Breast epithelium (tissue), 4 donors: ENCODE measurements at regions of chr3 and their contacts with region 1.

Region 1: DNA sequence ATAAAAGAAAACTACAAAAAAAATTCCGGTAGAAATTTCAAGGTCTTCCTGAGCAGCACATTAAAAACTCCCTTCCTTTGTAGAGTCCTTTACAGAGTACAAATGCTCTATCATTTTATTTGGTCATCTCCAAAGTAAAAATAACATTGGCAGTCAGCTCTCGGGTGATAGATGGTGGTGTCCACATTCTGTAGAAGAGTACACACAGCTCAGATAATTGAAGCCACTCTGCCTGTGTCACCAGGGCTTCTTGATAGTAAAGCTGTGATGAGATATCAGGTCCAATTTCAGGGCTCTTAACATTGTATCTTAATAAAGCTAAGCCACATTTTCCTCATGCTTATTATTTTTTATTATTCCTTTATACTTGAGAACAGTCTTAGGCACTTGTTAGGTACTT is 371.6 kb downstream of the TAFA4 start:
- DNase-seq: no peak
- H3K4me3 ChIP-seq: no peak overlapping the region
- H3K27ac ChIP-seq: no peak overlapping the region
- H3K4me1 ChIP-seq: no peaks in the 10 kb centered on the region
- H3K27me3 ChIP-seq: no peaks in the 10 kb centered on the region
- CTCF ChIP-seq: no peak
- POLR2A ChIP-seq: no peak

Region 2: GRCh38 chr3:68103811-68104210 is 456.9 kb before region 1 on chr3:
- intact Hi-C with region 1: loop called (anchors 10 kb)
- DNase-seq: no peak
- H3K4me3 ChIP-seq: no peak overlapping the region
- H3K27ac ChIP-seq: no peak overlapping the region
- H3K4me1 ChIP-seq: no peaks in the 10 kb centered on the region
- H3K27me3 ChIP-seq: no peaks in the 10 kb centered on the region
- CTCF ChIP-seq: no peak
- POLR2A ChIP-seq: no peak

Region 3: DNA sequence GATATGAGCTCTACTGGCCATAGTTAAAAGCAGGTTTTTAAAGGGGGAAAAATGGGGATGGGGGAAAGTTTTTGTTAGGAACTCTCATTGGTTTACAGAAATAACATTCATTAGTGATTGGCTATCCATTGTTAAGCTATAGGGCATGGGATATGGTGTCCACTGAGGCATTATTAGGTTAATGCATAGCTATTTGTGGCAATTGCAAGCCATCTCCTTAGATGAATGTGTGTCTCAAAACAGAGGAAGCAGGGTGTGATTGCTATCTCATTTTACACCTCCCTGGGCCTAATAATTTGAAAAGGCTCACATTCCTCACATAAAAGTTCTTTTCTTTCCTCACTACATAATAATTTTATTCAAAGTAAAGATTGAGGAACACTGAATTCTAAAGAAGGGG is 24.9 kb before region 1 on chr3:
- intact Hi-C with region 1: no loop called
- DNase-seq: no peak
- H3K4me3 ChIP-seq: no peak overlapping the region
- H3K27ac ChIP-seq: no peak overlapping the region
- H3K4me1 ChIP-seq: no peaks in the 10 kb centered on the region
- H3K27me3 ChIP-seq: no peaks in the 10 kb centered on the region
- CTCF ChIP-seq: no peak
- POLR2A ChIP-seq: no peak

Region 4: GRCh38 chr3:68639766-68640165 is 79.0 kb after region 1 on chr3:
- intact Hi-C with region 1: no loop called
- DNase-seq: no peak
- H3K4me3 ChIP-seq: no peak overlapping the region
- H3K27ac ChIP-seq: no peak overlapping the region
- H3K4me1 ChIP-seq: no peaks in the 10 kb centered on the region
- H3K27me3 ChIP-seq: no peaks in the 10 kb centered on the region
- CTCF ChIP-seq: no peak
- POLR2A ChIP-seq: no peak